ENCODE measurements at regions of chr15 and their contacts with region 1.

Region 1: DNA sequence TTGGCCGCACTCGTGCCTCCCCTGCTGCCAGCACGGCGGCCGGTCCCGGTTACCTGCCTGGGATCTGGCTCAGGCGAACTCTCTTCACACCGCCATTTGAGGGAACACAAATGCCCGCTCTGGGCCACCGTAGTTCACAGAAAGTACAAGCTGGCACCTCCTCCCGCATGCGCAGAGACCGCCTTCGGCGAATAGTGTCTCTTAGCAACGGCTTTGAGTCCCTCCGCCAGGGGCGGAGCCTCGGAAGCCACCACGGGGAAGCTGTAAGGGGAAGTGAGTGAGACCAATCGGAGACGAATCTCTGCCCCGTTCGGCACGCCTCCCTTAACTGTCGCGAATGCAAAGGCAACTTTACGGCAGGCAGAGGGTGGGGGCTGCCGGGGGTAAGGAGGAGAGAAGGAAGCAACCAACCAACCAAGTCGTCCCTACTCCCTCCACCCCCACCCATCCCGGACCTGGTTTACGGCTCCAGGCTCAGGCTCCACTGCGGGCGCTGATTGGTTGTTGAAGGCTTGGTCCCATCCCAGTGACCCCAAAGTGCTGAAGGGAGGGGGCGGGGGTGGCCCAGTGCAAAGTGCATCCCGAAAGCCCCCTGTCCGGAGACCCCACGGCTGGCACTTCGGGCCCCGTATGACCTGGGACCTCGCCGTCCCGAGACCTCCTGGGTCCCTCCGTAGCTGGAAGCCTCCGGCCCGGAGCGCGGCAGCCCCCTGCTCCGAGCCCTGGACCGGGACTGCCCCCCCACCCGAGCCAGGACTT is at the starts of genes ASB7 and LINS1:
- DNase-seq: peak; percentile 100
- H3K4me3 Mint-ChIP-seq: no peak within 1 kb of the TSS
- H3K27ac Mint-ChIP-seq: no peak within 1 kb of the TSS
- H3K4me1 Mint-ChIP-seq: peaks cover 63% of the 10 kb centered on the region
- H3K27me3 Mint-ChIP-seq: no peaks in the 10 kb centered on the region
- total RNA-seq, gene ASB7: 19.6 to 21.3 TPM
- total RNA-seq, gene LINS1: 31.6 to 37.0 TPM

Region 2: DNA sequence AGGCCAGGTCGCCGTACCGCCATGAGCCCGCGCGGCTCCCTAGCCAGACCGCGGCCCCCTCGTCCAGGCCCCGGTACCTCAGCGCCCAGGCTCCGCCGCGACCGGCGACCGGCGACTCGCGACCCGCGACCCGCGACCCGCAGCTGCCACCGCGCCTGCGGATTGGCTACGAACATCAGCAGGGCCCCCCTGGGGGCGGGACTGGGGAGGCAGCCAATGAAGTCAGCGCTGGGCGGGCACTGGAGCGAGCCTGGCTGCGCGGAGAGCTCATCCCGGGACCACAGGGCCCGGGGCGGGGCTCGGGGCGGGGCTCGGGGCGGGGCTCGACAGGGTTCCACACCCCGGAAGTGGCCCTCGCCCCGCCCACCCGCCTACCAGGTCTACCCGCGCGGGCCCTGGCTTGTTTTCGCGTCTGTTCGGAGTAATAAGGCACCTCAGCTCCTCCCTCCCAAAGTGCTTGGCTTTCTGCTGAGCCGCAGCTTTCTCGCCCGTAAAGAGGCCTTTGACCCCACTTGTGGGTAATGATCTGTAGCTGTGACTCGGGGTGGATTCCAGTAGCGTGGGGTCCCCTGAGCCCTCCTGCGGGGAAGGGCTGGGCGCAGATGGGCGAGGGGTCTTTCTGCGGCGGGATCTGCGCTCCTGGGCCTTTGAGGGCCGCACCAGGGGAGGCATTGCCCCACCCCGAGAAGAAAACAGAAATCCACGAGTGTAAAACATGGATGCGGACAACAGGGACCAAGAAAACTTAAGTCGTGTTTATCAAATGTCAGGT is 868.8 kb before region 1 on chr15 and contains the start of gene LYSMD4:
- CTCF ChIA-PET with region 1: no interaction called
- POLR2A ChIA-PET with region 1: no interaction called
- intact Hi-C with region 1: loop called (anchors 10 kb)
- DNase-seq: peak; percentile 99
- H3K4me3 Mint-ChIP-seq: peak within 1 kb of the TSS; percentile 75
- H3K27ac Mint-ChIP-seq: peak within 1 kb of the TSS; percentile 92
- H3K4me1 Mint-ChIP-seq: peaks cover 11% of the 10 kb centered on the region
- H3K27me3 Mint-ChIP-seq: no peaks in the 10 kb centered on the region
- total RNA-seq, gene LYSMD4: 5.2 to 7.6 TPM

Region 3: DNA sequence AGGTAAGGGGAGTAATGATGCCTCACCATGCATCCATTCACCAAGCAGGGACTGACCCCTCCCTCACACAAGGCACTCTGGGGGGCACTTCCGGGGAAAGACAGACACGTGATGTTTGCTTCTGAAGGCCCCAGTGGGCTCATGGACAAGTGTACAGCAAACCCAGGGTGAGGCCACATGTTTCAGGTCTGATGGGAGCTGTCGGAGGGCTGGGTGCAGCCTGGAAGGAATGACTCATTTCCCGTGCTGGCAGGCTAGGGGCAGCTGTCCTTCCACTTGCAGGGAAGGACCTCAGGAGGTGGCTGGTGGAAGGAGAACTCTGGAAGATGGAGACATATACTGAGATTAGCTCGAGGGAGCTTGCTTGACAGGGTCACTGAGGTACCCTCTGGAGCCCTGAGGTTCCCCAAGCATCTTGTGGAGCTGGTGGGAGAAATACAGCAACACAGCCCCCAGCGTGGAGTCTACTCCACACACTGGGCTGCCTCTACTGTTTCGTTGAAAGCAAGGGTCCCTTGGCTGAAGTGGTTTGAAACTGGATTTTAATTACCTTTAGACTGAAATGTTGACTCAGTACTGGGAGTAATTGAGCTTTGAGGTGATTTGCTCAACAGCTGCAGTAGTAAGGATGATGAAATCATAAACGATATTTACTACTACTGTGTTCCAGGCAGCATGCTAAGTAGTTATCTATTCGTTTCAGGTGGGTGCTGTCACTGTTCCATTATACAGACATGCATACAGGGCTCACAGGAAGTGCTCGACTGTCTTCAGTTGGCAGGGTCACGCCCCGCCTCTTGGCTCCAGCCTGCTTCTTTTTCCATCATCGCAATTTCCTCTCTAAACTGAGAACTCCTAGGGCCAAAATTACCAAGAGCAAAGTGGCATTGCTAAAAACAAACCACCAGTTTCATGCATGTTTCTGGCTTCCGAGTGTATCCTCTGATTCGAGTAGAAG is 490.9 kb before region 1 on chr15:
- CTCF ChIA-PET with region 1: no interaction called
- POLR2A ChIA-PET with region 1: no interaction called
- intact Hi-C with region 1: loop called (anchors 5 kb)
- DNase-seq: peak; percentile 75
- H3K4me3 Mint-ChIP-seq: no peak overlapping the region
- H3K27ac Mint-ChIP-seq: peak overlapping the region; percentile 95
- H3K4me1 Mint-ChIP-seq: peaks cover 27% of the 10 kb centered on the region
- H3K27me3 Mint-ChIP-seq: no peaks in the 10 kb centered on the region

Region 4: GRCh38 chr15:100572362-100572983 is 29.8 kb before region 1 on chr15:
- CTCF ChIA-PET with region 1: interaction called, 8 read pairs
- POLR2A ChIA-PET with region 1: interaction called, 4 read pairs
- intact Hi-C with region 1: loop called (anchors 2 kb)
- DNase-seq: no peak
- H3K4me3 Mint-ChIP-seq: no peak overlapping the region
- H3K27ac Mint-ChIP-seq: peak overlapping the region; percentile 82
- H3K4me1 Mint-ChIP-seq: peaks cover 54% of the 10 kb centered on the region
- H3K27me3 Mint-ChIP-seq: no peaks in the 10 kb centered on the region

Region 5: DNA sequence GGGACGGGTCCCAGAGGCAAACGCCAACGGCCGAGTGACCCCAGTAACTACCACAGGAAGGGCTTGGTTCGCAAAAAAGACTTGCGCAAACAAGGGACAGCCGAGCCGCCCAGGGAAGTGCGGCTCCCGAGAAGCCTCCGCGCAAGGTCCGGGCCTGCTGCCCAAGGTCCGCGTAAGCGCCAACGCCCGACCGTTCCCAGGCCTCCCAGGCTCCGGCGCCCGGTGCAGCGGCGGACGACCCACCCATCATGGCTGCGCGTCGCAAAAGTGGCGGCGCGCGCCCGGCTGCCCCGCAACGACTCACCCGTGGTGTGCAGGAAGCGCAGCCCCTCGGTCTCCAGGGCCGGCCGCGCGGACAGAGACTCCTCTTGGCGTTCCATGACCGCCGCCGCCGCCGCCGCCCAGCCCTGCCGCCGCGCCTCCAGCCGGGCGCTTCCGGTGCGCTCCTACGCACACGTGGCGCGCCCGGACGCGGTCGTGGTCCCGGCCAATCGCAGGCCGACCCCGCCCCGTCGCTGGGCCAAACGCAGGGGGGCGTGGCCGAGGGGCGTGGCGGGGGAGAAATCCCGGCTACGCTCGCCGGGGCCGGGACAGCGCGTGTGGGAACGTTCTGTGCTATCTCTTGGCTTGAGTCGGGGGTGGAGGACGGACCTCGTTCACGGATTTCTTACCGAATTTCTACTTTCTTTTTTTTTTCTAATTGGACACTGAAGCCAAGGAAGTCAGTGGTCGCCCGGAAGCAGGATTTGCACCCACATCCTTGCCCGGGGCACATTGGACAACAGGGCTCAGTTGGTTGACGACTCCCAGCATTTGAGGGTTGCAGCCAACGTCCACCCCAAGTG is 675.0 kb after region 1 on chr15 and contains the start of gene SELENOS:
- CTCF ChIA-PET with region 1: no interaction called
- POLR2A ChIA-PET with region 1: no interaction called
- intact Hi-C with region 1: loop called (anchors 5 kb)
- DNase-seq: peak; percentile 90
- H3K4me3 Mint-ChIP-seq: peak within 1 kb of the TSS; percentile 92
- H3K27ac Mint-ChIP-seq: peak within 1 kb of the TSS; percentile 81
- H3K4me1 Mint-ChIP-seq: peaks cover 29% of the 10 kb centered on the region
- H3K27me3 Mint-ChIP-seq: no peaks in the 10 kb centered on the region
- total RNA-seq, gene SELENOS: 30.9 to 31.7 TPM

Measured in activated CD4-positive, alpha-beta memory T cell treated with anti-CD3 and anti-CD28 coated beads for 36 hours (primary cell).